ENCODE measurements at regions of chr3 and their contacts with region 1.

Region 1: DNA sequence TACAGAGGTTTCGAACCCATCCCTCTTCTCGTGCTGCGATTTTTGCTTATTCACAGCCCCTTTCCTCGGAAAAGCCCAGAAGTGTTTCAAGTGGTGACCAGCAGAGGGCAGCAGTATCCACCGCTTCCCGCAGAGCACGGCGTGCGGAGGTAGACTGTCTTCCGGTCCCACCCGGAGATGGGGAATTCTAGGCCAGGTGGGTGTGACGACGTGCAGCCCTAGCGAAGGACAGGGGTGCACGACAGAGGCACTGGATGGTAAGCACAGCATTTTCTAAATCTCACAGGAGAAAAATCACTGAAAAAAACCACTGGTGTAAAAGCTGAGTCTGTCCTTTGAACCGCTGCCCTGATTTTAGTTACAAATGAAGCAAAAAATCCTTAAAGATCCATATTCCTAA is 7.4 kb upstream of the PSMD6 start:
- DNase-seq: peak; percentile 91
- H3K4me3 ChIP-seq: peak overlapping the region in 6 of 8 donors; percentile 20 to 67 (median 23)
- H3K27ac ChIP-seq: peak overlapping the region in 1 of 8 donors; percentile 54
- H3K4me1 ChIP-seq: peaks cover 0 to 13% (median 10%) of the 10 kb centered on the region in 6 donors
- H3K27me3 ChIP-seq: peaks cover 0 to 30% (median 6%) of the 10 kb centered on the region in 7 donors
- CTCF ChIP-seq: peak; percentile 61 to 89 (median 86)
- POLR2A ChIP-seq: no peak

Region 2: GRCh38 chr3:63354160-63354559 is 676.6 kb before region 1 on chr3:
- intact Hi-C with region 1: no loop called
- DNase-seq: no peak
- H3K4me3 ChIP-seq: no peak overlapping the region
- H3K27ac ChIP-seq: no peak overlapping the region
- H3K4me1 ChIP-seq: peaks cover 0 to 5% (median 0%) of the 10 kb centered on the region in 6 donors
- H3K27me3 ChIP-seq: peaks cover 0 to 36% (median 0%) of the 10 kb centered on the region in 7 donors
- CTCF ChIP-seq: no peak
- POLR2A ChIP-seq: no peak

Region 3: GRCh38 chr3:63847718-63848450 is 182.9 kb before region 1 on chr3:
- intact Hi-C with region 1: no loop called
- DNase-seq: no peak
- H3K4me3 ChIP-seq: no peak overlapping the region
- H3K27ac ChIP-seq: no peak overlapping the region
- H3K4me1 ChIP-seq: no peaks in the 10 kb centered on the region
- H3K27me3 ChIP-seq: no peaks in the 10 kb centered on the region
- CTCF ChIP-seq: no peak
- POLR2A ChIP-seq: no peak

Region 4: GRCh38 chr3:64399205-64399800 is 368.6 kb after region 1 on chr3:
- intact Hi-C with region 1: loop called (anchors 5 kb)
- DNase-seq: no peak
- H3K4me3 ChIP-seq: no peak overlapping the region
- H3K27ac ChIP-seq: no peak overlapping the region
- H3K4me1 ChIP-seq: no peaks in the 10 kb centered on the region
- H3K27me3 ChIP-seq: no peaks in the 10 kb centered on the region
- CTCF ChIP-seq: peak in 10 of 11 experiments; percentile 24 to 76 (median 60)
- POLR2A ChIP-seq: no peak

Region 5: DNA sequence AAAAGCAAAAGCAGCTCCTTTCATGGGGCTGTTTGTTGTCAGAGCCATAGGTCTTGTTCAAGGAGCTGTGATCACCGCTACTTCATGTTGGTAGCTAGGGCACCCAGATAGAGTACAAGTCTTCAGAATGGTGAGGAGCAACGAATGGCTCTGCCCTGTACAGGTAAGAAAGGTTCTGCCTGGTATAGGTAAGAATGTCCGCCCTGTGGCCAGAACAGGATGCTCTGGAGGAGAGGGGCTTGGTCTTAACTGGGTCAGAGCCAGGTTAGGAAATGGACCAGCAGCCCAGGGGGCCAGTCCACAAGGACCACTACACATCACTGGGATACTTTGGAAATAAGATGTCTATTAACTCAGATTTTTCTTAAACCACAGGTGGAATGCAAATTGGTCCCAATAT is 451.3 kb after region 1 on chr3:
- intact Hi-C with region 1: loop called (anchors 2 kb)
- DNase-seq: no peak
- H3K4me3 ChIP-seq: no peak overlapping the region
- H3K27ac ChIP-seq: no peak overlapping the region
- H3K4me1 ChIP-seq: peaks cover 0 to 9% (median 2%) of the 10 kb centered on the region in 6 donors
- H3K27me3 ChIP-seq: peaks cover 0 to 21% (median 0%) of the 10 kb centered on the region in 7 donors
- CTCF ChIP-seq: no peak
- POLR2A ChIP-seq: no peak